ENCODE measurements at regions of chr10 and their contacts with region 1.

Region 1: GRCh38 chr10:44968091-44968490 is 8.5 kb downstream of the RASSF4 start:
- H3K4me3 Mint-ChIP-seq: peak overlapping the region; percentile 57
- H3K27ac Mint-ChIP-seq: peak overlapping the region; percentile 88
- H3K4me1 Mint-ChIP-seq: peaks cover 97% of the 10 kb centered on the region
- H3K27me3 Mint-ChIP-seq: no peaks in the 10 kb centered on the region

Region 2: GRCh38 chr10:44801383-44802327 is 166.4 kb before region 1 on chr10:
- intact Hi-C with region 1: no loop called
- H3K4me3 Mint-ChIP-seq: no peak overlapping the region
- H3K27ac Mint-ChIP-seq: no peak overlapping the region
- H3K4me1 Mint-ChIP-seq: no peaks in the 10 kb centered on the region
- H3K27me3 Mint-ChIP-seq: peaks cover 12% of the 10 kb centered on the region

Region 3: GRCh38 chr10:44947371-44948152 is 20.5 kb before region 1 on chr10:
- intact Hi-C with region 1: loop called (anchors 1 kb)
- H3K4me3 Mint-ChIP-seq: peak overlapping the region; percentile 54
- H3K27ac Mint-ChIP-seq: peak overlapping the region; percentile 85
- H3K4me1 Mint-ChIP-seq: peaks cover 60% of the 10 kb centered on the region
- H3K27me3 Mint-ChIP-seq: no peaks in the 10 kb centered on the region

Measured in dendritic cell treated with granulocyte-macrophage colony-stimulating factor and Interleukin-4, amounts not matched to agents 40 ng/mL and 50 ng/mL, for 4 days (primary cell).